Posterior vena cava (tissue), 2 donors: ENCODE measurements at regions of chr16 and their contacts with region 1.

Region 1: GRCh38 chr16:23343643-23344612 is 41.8 kb downstream of the SCNN1B start:
- DNase-seq: no peak

Region 2: DNA sequence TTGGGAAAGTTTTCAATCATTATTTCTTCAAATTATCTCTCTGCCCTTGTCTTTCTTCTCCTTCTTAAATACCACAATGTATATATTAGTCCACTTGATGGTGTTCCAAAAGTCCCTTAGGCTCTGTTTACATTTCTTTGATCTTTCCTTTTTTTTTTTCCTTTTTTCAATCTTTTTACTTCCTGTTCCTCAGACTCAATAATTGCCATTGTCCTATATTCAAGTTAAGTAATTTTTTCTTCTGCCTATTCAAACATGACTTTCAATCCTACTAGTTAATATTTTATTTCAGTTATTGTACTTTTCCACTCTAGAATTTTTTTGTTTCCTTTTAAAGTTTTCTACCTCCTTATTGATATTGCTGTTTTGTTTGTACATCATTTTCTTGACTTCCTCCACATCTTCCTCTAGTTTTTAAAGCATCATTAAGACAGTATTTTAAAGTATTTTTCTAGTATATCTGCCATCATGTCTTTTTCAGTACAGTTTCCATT is 1406.5 kb before region 1 on chr16:
- intact Hi-C with region 1: no loop called
- DNase-seq: no peak

Region 3: GRCh38 chr16:23384878-23385277 is 41.0 kb after region 1 on chr16:
- intact Hi-C with region 1: loop called in 1 of 2 experiments (anchors 1 kb)
- DNase-seq: peak; percentile 28